Caco-2 (cell line): ENCODE measurements at regions of chr22 and their contacts with region 1.

Region 1: DNA sequence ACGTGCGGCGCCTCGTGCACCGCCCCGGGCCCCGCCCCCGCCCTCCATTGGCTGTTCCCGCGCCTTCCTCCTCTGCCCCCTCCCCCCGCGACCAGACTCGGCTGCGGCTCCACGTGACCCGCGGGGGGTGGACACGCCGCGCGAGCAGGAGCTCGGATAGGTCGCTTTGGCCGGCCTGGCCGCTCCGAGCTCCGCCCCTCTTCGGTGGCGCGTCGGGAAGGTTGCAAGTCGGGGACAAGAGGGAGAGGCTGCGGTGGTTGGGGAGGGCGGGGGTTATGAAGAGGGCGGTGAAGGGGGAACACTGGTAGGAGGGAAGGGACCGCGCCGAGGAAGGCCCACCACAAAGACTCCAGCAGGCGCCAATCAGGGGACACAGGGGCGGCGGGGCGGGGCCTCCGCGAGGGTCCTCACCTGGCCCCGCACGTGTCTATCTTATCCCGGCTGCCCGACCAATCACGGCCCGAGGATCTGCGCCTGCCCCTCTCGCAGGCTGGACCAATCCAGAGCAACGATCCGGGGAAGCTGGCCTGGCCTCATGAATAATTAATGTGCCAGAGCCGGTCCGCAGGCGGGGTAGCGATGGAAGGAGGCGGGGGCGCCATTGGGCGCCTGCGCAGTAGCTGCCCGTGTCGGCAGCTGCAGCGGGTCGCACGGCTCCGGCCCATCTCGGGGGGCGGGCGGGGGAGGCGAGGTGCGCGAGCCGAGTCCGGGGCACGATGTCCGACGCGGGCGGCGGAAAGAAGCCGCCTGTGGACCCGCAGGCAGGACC is at the start of gene TEF:
- DNase-seq: peak; percentile 99
- H3K4me3 ChIP-seq: peak within 1 kb of the TSS; percentile 51
- H3K4me3 Mint-ChIP-seq: peak within 1 kb of the TSS; percentile 86
- H3K27ac Mint-ChIP-seq: peak within 1 kb of the TSS; percentile 95
- H3K4me1 ChIP-seq: peaks cover 14% of the 10 kb centered on the region
- H3K4me1 Mint-ChIP-seq: peaks cover 7% of the 10 kb centered on the region
- H3K27me3 ChIP-seq: no peaks in the 10 kb centered on the region
- H3K27me3 Mint-ChIP-seq: no peaks in the 10 kb centered on the region
- CTCF ChIP-seq: no peak
- total RNA-seq, gene TEF: 13.8 and 17.8 TPM in 2 replicates

Region 2: GRCh38 chr22:40797427-40797826 is 584.1 kb before region 1 on chr22:
- CTCF ChIA-PET with region 1: interaction called, 11 read pairs
- POLR2A ChIA-PET with region 1: no interaction called
- intact Hi-C with region 1: no loop called
- DNase-seq: no peak
- H3K4me3 ChIP-seq: no peak overlapping the region
- H3K4me3 Mint-ChIP-seq: no peak overlapping the region
- H3K27ac Mint-ChIP-seq: no peak overlapping the region
- H3K4me1 ChIP-seq: no peaks in the 10 kb centered on the region
- H3K4me1 Mint-ChIP-seq: no peaks in the 10 kb centered on the region
- H3K27me3 ChIP-seq: no peaks in the 10 kb centered on the region
- H3K27me3 Mint-ChIP-seq: no peaks in the 10 kb centered on the region
- CTCF ChIP-seq: no peak

Region 3: DNA sequence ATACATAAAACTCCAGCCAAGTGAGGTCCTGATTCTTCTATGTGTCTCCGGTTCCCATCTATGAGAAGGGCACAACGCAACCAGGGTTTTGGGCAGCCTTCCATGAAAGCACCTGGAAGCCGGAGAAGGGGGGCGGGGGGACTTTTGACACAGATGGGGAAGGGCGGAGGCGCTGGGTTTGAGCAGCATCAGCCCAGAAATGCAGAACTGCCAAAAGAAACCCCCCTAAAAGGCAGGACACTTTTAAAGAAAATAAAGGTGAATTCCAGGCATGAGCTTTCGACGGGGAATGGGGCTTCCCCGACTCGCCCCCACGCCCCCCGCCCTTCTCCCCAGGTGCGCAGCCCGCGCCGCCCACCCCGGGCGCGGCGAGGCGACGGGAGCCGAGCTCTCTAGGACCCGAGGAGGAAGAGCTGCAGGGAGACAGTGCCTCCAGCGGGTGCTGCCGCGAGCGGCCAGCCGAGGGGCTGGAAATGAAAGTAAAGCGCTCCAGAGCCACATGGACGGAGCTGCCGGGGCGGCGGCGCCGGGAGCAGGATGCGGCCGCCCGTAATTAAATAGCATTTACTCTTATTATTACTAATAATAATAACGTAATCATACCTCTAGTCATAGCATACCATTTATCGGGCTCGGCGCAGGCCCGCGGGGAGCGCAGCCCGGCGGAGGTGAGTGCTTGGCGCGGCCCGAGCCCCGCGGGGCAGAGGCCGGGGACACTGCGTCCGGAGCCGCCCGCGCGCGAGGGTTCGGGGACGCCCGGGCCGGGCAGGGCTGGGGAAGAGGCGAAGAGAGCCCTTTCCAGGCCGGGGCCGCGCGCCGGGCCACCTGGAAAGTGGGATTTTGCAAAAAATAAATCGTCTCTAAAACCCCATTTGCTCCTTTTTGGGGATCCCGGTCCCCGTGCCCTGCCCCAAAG is 80.2 kb before region 1 on chr22 and contains the start of gene ZC3H7B:
- CTCF ChIA-PET with region 1: interaction called, 9 read pairs
- POLR2A ChIA-PET with region 1: interaction called, 15 read pairs
- intact Hi-C with region 1: no loop called
- DNase-seq: peak; percentile 83 to 88
- H3K4me3 ChIP-seq: peak within 1 kb of the TSS; percentile 58
- H3K4me3 Mint-ChIP-seq: peak within 1 kb of the TSS; percentile 68
- H3K27ac Mint-ChIP-seq: peak within 1 kb of the TSS; percentile 48
- H3K4me1 ChIP-seq: peaks cover 27% of the 10 kb centered on the region
- H3K4me1 Mint-ChIP-seq: peaks cover 20% of the 10 kb centered on the region
- H3K27me3 ChIP-seq: no peaks in the 10 kb centered on the region
- H3K27me3 Mint-ChIP-seq: no peaks in the 10 kb centered on the region
- CTCF ChIP-seq: peak; percentile 29 to 73
- total RNA-seq, gene ZC3H7B: 55.0 and 60.6 TPM in 2 replicates

Region 4: GRCh38 chr22:41360126-41360525 is 21.4 kb before region 1 on chr22:
- CTCF ChIA-PET with region 1: interaction called, 14 read pairs
- POLR2A ChIA-PET with region 1: interaction called, 32 read pairs
- intact Hi-C with region 1: loop called (anchors 1 kb)
- DNase-seq: peak; percentile 89 to 94
- H3K4me3 ChIP-seq: no peak overlapping the region
- H3K4me3 Mint-ChIP-seq: peak overlapping the region; percentile 39
- H3K27ac Mint-ChIP-seq: peak overlapping the region; percentile 97
- H3K4me1 ChIP-seq: peaks cover 53% of the 10 kb centered on the region
- H3K4me1 Mint-ChIP-seq: peaks cover 23% of the 10 kb centered on the region
- H3K27me3 ChIP-seq: no peaks in the 10 kb centered on the region
- H3K27me3 Mint-ChIP-seq: no peaks in the 10 kb centered on the region
- CTCF ChIP-seq: no peak

Region 5: DNA sequence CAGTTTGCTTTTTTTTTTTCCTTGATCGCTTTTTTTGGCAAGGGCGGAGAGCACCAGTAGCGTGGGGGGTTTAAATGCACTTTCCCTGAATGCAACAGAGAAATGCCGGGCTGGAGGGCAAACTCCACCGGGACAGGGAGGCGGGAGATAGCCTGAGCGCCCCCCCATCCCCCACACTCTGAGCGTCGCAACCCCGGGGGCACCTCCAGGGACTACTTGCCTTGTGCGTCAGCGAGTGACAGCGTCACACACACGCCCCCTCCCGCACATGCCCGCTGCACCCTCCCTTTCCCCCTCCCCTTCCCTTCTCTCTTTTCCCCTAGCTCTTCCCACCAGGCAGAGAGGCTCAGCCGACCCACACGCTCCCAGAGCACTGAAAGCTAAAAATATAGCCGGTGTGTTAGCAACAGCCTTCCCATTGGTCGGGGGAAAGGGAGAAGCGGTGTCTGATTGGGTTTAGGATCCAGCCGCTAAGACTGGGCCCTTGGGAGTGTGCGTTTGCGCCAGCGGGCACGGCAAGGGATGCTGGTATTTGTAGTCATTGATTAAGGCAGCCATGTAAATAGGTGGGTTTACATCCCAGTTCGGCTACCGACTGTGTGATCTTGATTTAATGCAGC is 66.8 kb after region 1 on chr22:
- CTCF ChIA-PET with region 1: interaction called, 5 read pairs
- POLR2A ChIA-PET with region 1: interaction called, 76 read pairs
- intact Hi-C with region 1: no loop called
- DNase-seq: peak; percentile 96 to 98
- H3K4me3 ChIP-seq: peak overlapping the region; percentile 93
- H3K4me3 Mint-ChIP-seq: peak overlapping the region; percentile 99
- H3K27ac Mint-ChIP-seq: peak overlapping the region; percentile 98
- H3K4me1 ChIP-seq: no peaks in the 10 kb centered on the region; the same call in 1 of the 2 replicates
- H3K4me1 Mint-ChIP-seq: peaks cover 13% of the 10 kb centered on the region
- H3K27me3 ChIP-seq: no peaks in the 10 kb centered on the region
- H3K27me3 Mint-ChIP-seq: no peaks in the 10 kb centered on the region
- CTCF ChIP-seq: no peak

Region 6: GRCh38 chr22:41589391-41590241 is 208.1 kb after region 1 on chr22 and contains the start of gene PMM1:
- CTCF ChIA-PET with region 1: no interaction called
- POLR2A ChIA-PET with region 1: interaction called, 13 read pairs
- intact Hi-C with region 1: no loop called
- DNase-seq: peak; percentile 100
- H3K4me3 ChIP-seq: peak within 1 kb of the TSS; percentile 92
- H3K4me3 Mint-ChIP-seq: peak within 1 kb of the TSS; percentile 87
- H3K27ac Mint-ChIP-seq: peak within 1 kb of the TSS; percentile 76
- H3K4me1 ChIP-seq: peaks cover 17% of the 10 kb centered on the region
- H3K4me1 Mint-ChIP-seq: no peaks in the 10 kb centered on the region
- H3K27me3 ChIP-seq: no peaks in the 10 kb centered on the region
- H3K27me3 Mint-ChIP-seq: no peaks in the 10 kb centered on the region
- CTCF ChIP-seq: no peak
- total RNA-seq, gene PMM1: 27.8 and 29.6 TPM in 2 replicates

Region 7: DNA sequence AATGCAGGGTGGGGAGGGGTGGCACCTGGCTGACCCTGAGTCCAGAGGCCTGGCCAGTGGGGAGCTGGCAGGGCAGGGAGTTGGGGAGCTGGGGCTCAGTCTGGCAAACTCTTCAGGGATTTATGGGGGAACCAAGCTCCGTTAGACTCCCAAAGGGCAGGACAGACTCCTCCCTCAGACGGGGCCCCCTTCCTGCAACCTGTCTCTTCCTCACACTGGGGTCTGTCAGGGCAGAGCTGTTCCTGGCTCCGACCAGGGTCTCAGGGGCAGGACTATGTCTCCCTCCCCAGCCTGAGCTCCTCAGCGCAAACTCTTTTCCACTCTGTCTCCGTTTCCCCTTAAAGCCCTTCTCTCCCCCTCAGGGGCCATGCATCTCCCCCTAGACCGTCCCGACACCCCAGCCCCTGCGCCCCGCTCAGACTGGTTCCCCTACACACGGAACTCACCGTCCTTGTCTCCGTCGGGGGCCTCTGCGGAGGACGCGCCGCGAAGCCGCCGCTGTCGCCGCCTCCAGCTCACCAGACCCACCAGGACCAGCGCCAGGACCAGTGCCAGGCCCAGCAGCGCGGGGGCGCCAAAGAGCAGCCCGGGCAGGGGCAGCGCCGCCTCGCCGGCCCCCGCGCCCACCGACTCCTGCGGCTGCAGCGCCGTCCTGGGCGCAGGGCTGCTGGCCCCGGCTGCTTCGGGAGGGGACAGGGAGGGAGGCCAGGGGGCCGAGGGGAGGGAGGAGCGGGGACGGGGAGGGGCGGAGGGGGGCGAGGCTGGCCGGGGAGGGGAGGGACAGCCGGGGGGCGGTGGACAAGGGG is 544.3 kb after region 1 on chr22:
- CTCF ChIA-PET with region 1: no interaction called
- POLR2A ChIA-PET with region 1: no interaction called
- intact Hi-C with region 1: no loop called
- DNase-seq: peak; percentile 73 to 92
- H3K4me3 ChIP-seq: peak overlapping the region; percentile 27
- H3K4me3 Mint-ChIP-seq: peak overlapping the region; percentile 77
- H3K27ac Mint-ChIP-seq: no peak overlapping the region
- H3K4me1 ChIP-seq: no peaks in the 10 kb centered on the region
- H3K4me1 Mint-ChIP-seq: no peaks in the 10 kb centered on the region
- H3K27me3 ChIP-seq: no peaks in the 10 kb centered on the region
- H3K27me3 Mint-ChIP-seq: no peaks in the 10 kb centered on the region
- CTCF ChIP-seq: peak; percentile 75 to 77